Head of caudate nucleus (tissue), 42 donors: ENCODE measurements at regions of chr16 and their contacts with region 1.

Region 1: DNA sequence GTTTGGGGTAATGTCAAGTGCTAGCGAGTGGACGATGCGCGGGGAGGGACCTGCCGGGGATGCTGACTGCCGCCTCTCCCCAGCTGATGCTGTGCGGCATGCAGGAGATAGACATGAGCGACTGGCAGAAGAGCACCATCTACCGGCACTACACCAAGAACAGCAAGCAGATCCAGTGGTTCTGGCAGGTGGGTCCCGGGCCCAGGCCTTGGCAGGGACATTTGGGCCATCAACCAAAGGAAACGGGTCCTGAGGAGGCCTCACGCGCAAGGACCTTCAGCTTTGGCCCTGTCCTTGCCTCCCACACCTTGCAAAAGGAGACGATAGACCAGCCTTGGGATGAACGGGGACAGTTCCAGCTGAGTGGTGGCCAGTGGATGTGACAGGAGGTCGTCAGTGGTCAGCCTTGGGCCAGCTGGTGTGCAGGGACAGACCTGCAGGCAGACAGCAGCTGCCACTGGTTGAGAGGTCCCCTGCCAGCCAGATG is 13.6 kb upstream of the CLEC18A start:
- DNase-seq: peak; percentile 42 to 86 (median 68)

Region 2: DNA sequence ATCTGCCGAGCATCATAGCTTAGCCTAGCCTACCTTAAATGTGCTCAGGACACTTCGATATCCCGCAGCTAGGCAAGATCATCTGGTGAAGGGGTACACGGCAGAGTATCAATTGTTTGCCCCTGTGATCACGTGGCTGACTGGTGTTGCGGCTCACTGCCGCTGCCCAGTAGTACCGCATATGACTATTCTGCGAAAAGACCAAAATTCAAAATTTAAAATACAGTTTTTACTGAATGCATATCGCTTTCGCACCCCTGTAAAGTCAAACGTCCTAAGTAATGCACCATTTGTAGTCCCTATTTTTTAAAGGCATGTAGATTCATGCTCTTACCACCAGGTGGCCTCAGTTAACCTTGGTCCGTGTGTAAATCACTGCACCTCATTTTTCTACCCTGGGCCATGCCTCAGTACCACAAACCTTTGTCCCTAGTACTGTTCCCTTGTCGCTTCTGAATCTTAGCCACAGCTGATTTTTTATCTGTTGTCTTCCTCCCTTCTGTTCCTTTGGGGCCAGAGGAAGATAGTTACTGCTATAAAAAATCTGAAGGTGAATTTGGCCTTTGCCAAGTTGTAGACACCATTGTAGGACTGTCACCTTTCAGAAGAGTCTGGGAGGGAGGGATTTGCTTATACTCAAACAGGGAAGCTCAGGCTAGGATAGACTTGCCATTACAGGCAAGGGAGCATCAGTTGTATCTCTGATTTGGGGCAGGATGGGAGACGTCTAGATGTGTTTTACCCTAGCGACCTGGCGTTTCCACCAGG is 141.0 kb before region 1 on chr16:
- intact Hi-C with region 1: loop called (anchors 2 kb)
- DNase-seq: peak in 26 of 42 donors; percentile 10 to 84 (median 54)

Region 3: GRCh38 chr16:69848637-69849545 is 88.6 kb before region 1 on chr16:
- intact Hi-C with region 1: no loop called
- DNase-seq: peak in 40 of 42 donors; percentile 16 to 89 (median 52)